Activated CD4-positive, alpha-beta T cell treated with anti-CD3 and anti-CD28 coated beads for 36 hours (primary cell): ENCODE measurements at regions of chr1 and their contacts with region 1.

Region 1: GRCh38 chr1:19651141-19651737 is 7.1 kb downstream of the NBL1 start:
- DNase-seq: peak; percentile 73
- ATAC-seq: peak; percentile 72
- H3K4me3 Mint-ChIP-seq: no peak overlapping the region
- H3K27ac Mint-ChIP-seq: no peak overlapping the region
- H3K4me1 Mint-ChIP-seq: peaks cover 18% of the 10 kb centered on the region
- H3K27me3 Mint-ChIP-seq: no peaks in the 10 kb centered on the region

Region 2: DNA sequence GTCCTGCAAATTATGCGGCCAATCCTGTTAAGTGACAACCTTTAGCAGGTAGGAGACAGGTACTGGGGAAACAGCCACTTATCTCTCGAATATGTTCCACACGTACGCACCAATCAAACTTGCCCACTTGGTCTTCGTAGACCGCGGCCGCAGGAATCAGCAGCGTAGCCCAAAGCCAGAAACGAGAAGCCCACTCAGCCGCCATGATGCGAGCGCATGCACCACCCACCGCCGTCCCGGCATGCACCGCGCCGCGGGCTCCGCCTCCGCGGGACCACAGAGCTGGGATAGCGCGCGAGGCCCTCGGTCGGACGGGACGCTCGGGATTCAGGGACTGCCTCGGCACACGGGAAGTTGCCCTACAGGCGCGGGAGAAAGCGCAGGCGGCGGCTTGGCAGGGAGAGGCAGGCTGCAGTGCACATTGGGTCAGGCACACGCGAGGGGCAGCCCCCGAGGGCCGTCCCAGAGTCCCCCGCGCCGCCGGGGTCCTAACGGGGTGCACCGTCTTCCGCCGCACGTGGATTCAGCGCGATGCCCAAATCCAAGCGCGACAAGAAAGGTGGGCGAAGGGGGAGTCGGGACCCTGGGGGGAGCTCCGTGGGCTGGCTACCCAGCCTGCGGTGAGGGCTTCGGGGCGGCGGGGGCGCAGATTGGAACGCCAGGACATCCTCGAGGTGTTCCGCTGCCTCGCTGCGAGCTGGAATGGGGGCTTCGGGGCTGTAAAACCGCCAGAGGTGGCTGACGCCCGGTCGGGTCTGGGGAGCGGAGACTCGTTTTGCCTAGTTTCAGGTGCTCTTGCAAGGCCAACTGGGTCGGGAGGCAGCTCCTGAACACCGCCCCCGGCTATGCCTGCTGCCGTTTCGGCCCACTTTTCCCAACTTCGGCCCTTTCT is 399.7 kb before region 1 on chr1 and contains the starts of genes EMC1 and MRTO4:
- CTCF ChIA-PET with region 1: interaction called, 4 read pairs
- POLR2A ChIA-PET with region 1: no interaction called
- intact Hi-C with region 1: loop called (anchors 1 to 10 kb)
- DNase-seq: peak; percentile 94
- ATAC-seq: peak; percentile 87
- H3K4me3 Mint-ChIP-seq: peak within 1 kb of the TSS; percentile 99
- H3K27ac Mint-ChIP-seq: peak within 1 kb of the TSS; percentile 96
- H3K4me1 Mint-ChIP-seq: peaks cover 45% of the 10 kb centered on the region
- H3K27me3 Mint-ChIP-seq: no peaks in the 10 kb centered on the region
- total RNA-seq, gene EMC1: 45.0 to 59.0 TPM
- total RNA-seq, gene MRTO4: 82.6 to 95.0 TPM

Region 3: GRCh38 chr1:19341201-19342072 is 309.8 kb before region 1 on chr1:
- CTCF ChIA-PET with region 1: interaction called, 7 read pairs
- POLR2A ChIA-PET with region 1: no interaction called
- intact Hi-C with region 1: loop called (anchors 1 to 5 kb)
- DNase-seq: peak; percentile 89
- ATAC-seq: peak; percentile 76
- H3K4me3 Mint-ChIP-seq: no peak overlapping the region
- H3K27ac Mint-ChIP-seq: no peak overlapping the region
- H3K4me1 Mint-ChIP-seq: peaks cover 23% of the 10 kb centered on the region
- H3K27me3 Mint-ChIP-seq: no peaks in the 10 kb centered on the region

Region 4: DNA sequence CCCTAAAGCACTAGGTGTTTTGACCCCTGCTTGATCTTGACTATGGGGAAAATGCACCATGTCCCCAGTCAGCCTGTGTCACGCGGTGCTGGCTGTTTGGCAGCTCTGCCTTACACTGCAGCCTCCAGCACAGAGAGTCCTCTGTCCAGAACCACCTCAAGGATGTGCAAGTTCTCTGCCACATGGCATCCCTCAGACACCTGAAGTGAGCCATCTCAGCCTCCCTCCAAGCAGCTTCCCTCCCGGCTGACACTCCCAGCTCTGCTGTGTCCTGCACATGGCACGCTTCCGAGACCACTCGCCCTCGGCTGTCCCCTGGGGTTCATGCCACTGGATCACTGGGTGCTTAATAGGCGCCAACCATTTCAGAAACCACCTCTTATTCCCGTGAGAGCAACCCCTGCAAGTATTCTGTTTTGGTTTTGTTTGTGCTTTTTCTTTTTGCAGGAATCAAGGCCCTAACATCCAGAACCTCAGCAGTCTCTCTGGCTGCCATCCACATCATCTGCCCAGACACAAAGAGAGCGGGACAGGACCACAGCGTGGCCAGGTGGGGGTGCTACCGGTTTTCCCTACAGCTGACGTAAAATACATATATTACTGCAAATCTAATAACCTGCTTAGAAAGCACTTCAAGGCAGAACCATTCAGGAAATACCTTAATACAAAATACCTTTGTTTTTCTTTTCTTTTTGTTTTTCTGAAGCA is 211.6 kb before region 1 on chr1:
- CTCF ChIA-PET with region 1: interaction called, 4 read pairs
- POLR2A ChIA-PET with region 1: no interaction called
- intact Hi-C with region 1: loop called in 1 of 2 experiments (anchors 5 kb)
- DNase-seq: peak; percentile 60
- ATAC-seq: no peak
- H3K4me3 Mint-ChIP-seq: no peak overlapping the region
- H3K27ac Mint-ChIP-seq: peak overlapping the region; percentile 29
- H3K4me1 Mint-ChIP-seq: peaks cover 87% of the 10 kb centered on the region
- H3K27me3 Mint-ChIP-seq: no peaks in the 10 kb centered on the region

Region 5: DNA sequence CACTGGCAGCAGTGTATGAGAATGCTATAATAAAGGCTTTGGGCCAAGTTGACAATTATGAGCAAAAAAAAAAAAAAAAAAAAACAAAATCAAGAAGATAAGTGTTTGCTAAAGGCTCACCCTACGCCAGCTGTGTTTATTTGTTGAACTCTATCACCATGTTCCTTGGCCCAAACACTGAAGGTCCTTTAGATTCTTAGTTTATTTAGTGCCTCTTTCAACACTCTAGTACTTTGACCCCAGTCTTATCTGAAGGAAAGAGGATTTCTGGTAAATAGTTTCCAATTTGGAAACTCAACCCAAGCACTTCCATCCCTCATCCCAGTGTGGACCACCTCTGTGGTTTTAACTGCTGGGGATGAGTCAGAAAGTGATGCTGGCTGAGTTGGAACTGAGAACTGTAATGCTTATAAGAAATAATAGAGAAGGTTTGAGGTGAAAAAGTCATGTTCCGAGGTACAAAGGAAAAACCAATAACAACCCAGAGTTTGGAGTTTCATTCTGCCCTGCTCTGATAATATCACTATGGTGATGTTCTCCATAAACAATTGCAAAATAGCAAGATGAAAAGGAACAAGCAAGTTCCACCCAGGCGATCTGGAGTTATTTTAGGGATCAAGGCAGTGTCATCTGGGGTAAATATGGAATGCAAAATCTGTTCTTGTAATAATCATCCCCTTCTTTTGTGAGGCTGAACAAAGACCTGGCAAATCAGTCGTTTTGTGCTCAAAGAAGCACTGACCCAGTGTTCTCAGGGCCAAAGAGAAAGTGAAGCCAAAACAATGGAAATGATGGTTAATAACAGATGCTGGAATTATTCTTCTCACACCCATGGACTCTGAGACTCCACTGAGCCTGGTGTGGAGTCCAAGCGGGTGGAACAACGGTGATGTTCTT is 146.2 kb before region 1 on chr1:
- CTCF ChIA-PET with region 1: no interaction called
- POLR2A ChIA-PET with region 1: no interaction called
- intact Hi-C with region 1: no loop called
- DNase-seq: no peak
- ATAC-seq: no peak
- H3K4me3 Mint-ChIP-seq: no peak overlapping the region
- H3K27ac Mint-ChIP-seq: no peak overlapping the region
- H3K4me1 Mint-ChIP-seq: peaks cover 26% of the 10 kb centered on the region
- H3K27me3 Mint-ChIP-seq: no peaks in the 10 kb centered on the region

Region 6: GRCh38 chr1:19704247-19705113 is 53.2 kb after region 1 on chr1:
- CTCF ChIA-PET with region 1: interaction called, 10 read pairs
- POLR2A ChIA-PET with region 1: no interaction called
- intact Hi-C with region 1: no loop called
- DNase-seq: peak; percentile 77
- ATAC-seq: peak; percentile 75
- H3K4me3 Mint-ChIP-seq: no peak overlapping the region
- H3K27ac Mint-ChIP-seq: no peak overlapping the region
- H3K4me1 Mint-ChIP-seq: peaks cover 18% of the 10 kb centered on the region
- H3K27me3 Mint-ChIP-seq: no peaks in the 10 kb centered on the region

Region 7: GRCh38 chr1:20885121-20885520 is 1233.9 kb after region 1 on chr1:
- CTCF ChIA-PET with region 1: no interaction called
- POLR2A ChIA-PET with region 1: no interaction called
- intact Hi-C with region 1: no loop called
- DNase-seq: no peak
- ATAC-seq: no peak
- H3K4me3 Mint-ChIP-seq: no peak overlapping the region
- H3K27ac Mint-ChIP-seq: no peak overlapping the region
- H3K4me1 Mint-ChIP-seq: no peaks in the 10 kb centered on the region
- H3K27me3 Mint-ChIP-seq: no peaks in the 10 kb centered on the region